ENCODE measurements at regions of chr1 and their contacts with region 1.

Region 1: GRCh38 chr1:150629115-150629928 is at the start of gene ENSA:
- DNase-seq: peak; percentile 89 to 99 (median 92)
- ATAC-seq: peak; percentile 85
- H3K4me3 ChIP-seq: peak within 1 kb of the TSS; percentile 77
- H3K4me3 Mint-ChIP-seq: no peak within 1 kb of the TSS
- H3K27ac ChIP-seq: peak within 1 kb of the TSS; percentile 96 to 97
- H3K27ac Mint-ChIP-seq: no peak within 1 kb of the TSS
- H3K4me1 ChIP-seq: peaks cover 24% of the 10 kb centered on the region
- H3K4me1 Mint-ChIP-seq: peaks cover 21% of the 10 kb centered on the region
- H3K27me3 ChIP-seq: no peaks in the 10 kb centered on the region
- H3K27me3 Mint-ChIP-seq: no peaks in the 10 kb centered on the region
- CTCF ChIP-seq: no peak
- total RNA-seq, gene ENSA: 132 to 137 TPM

Region 2: DNA sequence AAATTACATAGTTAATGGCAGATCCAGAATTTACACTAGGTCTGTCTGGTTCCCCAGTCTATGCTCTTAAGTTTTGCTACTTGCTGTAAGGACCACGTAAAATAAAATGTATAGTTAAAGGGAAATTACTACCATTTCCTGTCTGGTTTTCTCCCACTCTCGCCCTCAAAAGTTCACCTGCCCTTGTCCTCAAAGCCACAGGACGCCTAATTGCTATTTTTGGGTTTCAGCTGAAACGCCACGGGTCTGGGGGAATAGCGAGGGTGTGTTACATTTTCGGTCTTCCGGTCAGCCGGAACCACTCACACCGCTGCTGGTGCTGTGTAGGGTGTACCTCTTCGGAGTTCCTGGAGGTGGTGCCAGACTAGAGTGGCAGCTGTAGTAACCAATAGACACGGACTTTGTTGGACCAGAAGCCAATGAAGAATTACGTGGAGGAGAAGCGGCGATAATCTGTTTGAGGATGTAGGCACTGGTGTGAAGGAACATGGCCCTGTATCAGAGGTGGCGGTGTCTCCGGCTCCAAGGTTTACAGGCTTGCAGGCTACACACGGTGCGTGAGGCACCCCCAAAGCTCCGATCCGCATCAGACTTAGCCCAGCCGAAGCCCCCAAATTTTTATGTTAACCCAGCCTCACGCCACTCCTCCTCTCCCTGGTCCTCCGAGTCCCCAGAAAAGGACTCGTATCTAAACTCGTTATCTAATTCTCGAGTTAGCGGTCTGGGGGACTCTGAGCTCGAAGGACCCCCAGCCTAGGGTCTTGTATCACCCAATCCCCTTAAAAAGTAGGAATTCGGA is 142.2 kb before region 1 on chr1 and contains the start of gene TARS2:
- CTCF ChIA-PET with region 1: no interaction called
- POLR2A ChIA-PET with region 1: interaction called, 10 read pairs
- intact Hi-C with region 1: no loop called
- DNase-seq: peak; percentile 85 to 99 (median 93)
- ATAC-seq: peak; percentile 100
- H3K4me3 ChIP-seq: peak within 1 kb of the TSS; percentile 67
- H3K4me3 Mint-ChIP-seq: peak within 1 kb of the TSS; percentile 98
- H3K27ac ChIP-seq: peak within 1 kb of the TSS; percentile 53 to 59
- H3K27ac Mint-ChIP-seq: peak within 1 kb of the TSS; percentile 84
- H3K4me1 ChIP-seq: peaks cover 16% of the 10 kb centered on the region
- H3K4me1 Mint-ChIP-seq: peaks cover 20% of the 10 kb centered on the region
- H3K27me3 ChIP-seq: no peaks in the 10 kb centered on the region
- H3K27me3 Mint-ChIP-seq: no peaks in the 10 kb centered on the region
- CTCF ChIP-seq: no peak
- total RNA-seq, gene TARS2: 22.8 to 25.3 TPM

Region 3: DNA sequence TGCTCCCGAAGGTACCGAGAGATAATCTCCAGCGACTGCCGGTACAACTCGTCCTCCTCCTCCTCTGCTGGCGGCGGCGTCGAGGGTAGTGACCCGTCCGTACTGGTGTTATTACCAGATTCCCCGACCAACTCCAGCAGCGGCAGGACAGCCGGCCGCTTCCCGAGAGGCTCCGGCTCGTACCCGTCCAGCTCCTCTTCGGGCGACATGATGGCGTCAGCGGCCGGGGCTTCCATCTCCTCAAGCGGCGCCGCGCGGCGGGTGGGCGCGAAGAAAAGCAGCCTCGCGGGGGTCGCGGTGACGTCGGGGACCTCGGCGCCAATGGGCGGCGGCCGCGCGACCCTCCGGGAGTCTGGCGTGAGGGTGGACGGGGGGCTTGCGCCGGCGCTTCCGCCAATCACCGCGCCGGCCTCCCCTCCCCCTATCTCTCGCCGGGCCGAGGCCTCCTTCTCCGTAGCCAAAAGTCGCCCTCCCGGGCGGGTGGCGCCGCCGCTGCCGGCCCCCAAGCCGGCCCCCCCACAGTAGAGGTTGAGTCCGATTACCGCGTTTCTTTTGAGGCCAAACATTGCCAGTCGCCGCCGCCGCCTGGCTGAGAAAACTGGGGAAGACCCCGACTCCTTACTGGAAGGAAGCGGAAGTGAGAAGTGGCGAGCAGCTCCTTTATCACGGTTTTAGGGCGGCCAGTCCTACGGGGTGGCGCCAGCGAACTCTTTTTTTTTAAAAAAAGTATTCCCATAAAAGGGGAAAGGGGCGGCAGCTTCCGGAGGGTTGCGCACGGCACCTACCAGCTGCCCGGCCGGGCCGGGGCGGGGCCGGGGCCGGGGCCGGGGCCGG is 50.1 kb before region 1 on chr1 and contains the start of gene MCL1:
- CTCF ChIA-PET with region 1: no interaction called
- POLR2A ChIA-PET with region 1: interaction called, 94 read pairs
- intact Hi-C with region 1: loop called (anchors 2 kb)
- DNase-seq: peak; percentile 70 to 95 (median 82)
- ATAC-seq: peak; percentile 63
- H3K4me3 ChIP-seq: peak within 1 kb of the TSS; percentile 84
- H3K4me3 Mint-ChIP-seq: peak within 1 kb of the TSS; percentile 99
- H3K27ac ChIP-seq: peak within 1 kb of the TSS; percentile 93 to 97
- H3K27ac Mint-ChIP-seq: peak within 1 kb of the TSS; percentile 98
- H3K4me1 ChIP-seq: peaks cover 22% of the 10 kb centered on the region
- H3K4me1 Mint-ChIP-seq: peaks cover 41% of the 10 kb centered on the region
- H3K27me3 ChIP-seq: no peaks in the 10 kb centered on the region
- H3K27me3 Mint-ChIP-seq: no peaks in the 10 kb centered on the region
- CTCF ChIP-seq: no peak
- total RNA-seq, gene MCL1: 737 to 747 TPM

Region 4: GRCh38 chr1:150650199-150650598 is 20.9 kb after region 1 on chr1:
- CTCF ChIA-PET with region 1: no interaction called
- POLR2A ChIA-PET with region 1: interaction called, 12 read pairs
- intact Hi-C with region 1: no loop called
- DNase-seq: no peak
- ATAC-seq: no peak
- H3K4me3 ChIP-seq: no peak overlapping the region
- H3K4me3 Mint-ChIP-seq: no peak overlapping the region
- H3K27ac ChIP-seq: no peak overlapping the region
- H3K27ac Mint-ChIP-seq: no peak overlapping the region
- H3K4me1 ChIP-seq: no peaks in the 10 kb centered on the region
- H3K4me1 Mint-ChIP-seq: no peaks in the 10 kb centered on the region
- H3K27me3 ChIP-seq: no peaks in the 10 kb centered on the region
- H3K27me3 Mint-ChIP-seq: no peaks in the 10 kb centered on the region
- CTCF ChIP-seq: no peak

Region 5: DNA sequence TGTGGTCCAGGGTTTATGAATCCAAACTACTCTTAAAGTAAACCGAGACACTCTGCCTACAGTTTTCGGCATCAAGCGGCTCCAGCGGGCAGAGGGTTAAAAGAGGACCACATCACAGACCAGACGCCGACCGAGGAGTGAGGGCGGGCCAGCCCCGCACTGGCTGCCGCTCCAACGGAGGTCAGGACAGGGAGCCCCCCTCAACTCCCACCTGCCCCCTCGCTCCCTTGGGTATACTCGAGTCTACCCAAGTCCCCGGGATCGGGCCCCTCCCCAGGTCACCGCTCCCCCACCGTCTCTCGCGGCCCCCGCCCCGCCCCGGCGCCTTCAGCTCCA is 246.8 kb after region 1 on chr1:
- CTCF ChIA-PET with region 1: no interaction called
- POLR2A ChIA-PET with region 1: no interaction called
- intact Hi-C with region 1: loop called in 1 of 2 experiments (anchors 1 kb)
- DNase-seq: no peak
- ATAC-seq: no peak
- H3K4me3 ChIP-seq: peak overlapping the region; percentile 79
- H3K4me3 Mint-ChIP-seq: peak overlapping the region; percentile 98
- H3K27ac ChIP-seq: peak overlapping the region; percentile 68 to 86
- H3K27ac Mint-ChIP-seq: peak overlapping the region; percentile 92
- H3K4me1 ChIP-seq: peaks cover 15% of the 10 kb centered on the region
- H3K4me1 Mint-ChIP-seq: peaks cover 43% of the 10 kb centered on the region
- H3K27me3 ChIP-seq: no peaks in the 10 kb centered on the region
- H3K27me3 Mint-ChIP-seq: no peaks in the 10 kb centered on the region
- CTCF ChIP-seq: no peak

Region 6: DNA sequence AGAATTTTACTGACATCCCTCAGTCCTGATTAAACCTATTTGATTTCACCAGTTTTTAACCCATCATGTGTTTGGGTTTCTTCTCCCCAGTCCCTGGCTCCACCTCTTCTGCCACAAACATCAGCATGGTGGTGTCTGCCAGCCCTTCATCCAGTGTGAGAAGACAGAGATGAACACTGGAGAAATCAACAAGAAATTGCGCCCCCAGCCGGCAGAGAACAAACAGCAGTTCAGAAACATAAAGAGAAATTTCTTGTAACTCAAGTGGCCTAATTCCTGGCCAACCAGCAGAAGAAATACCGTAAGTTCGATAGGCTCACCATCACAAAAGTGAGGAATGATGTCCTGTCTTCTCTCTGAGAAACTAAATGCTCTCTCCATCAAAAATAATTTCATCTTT is 1389.2 kb after region 1 on chr1:
- CTCF ChIA-PET with region 1: no interaction called
- POLR2A ChIA-PET with region 1: no interaction called
- intact Hi-C with region 1: no loop called
- DNase-seq: peak in 2 of 14 experiments; percentile 25 to 33
- ATAC-seq: no peak
- H3K4me3 ChIP-seq: no peak overlapping the region
- H3K4me3 Mint-ChIP-seq: no peak overlapping the region
- H3K27ac ChIP-seq: no peak overlapping the region
- H3K27ac Mint-ChIP-seq: no peak overlapping the region
- H3K4me1 ChIP-seq: peaks cover 5% of the 10 kb centered on the region
- H3K4me1 Mint-ChIP-seq: no peaks in the 10 kb centered on the region
- H3K27me3 ChIP-seq: peaks cover 0 to 3% of the 10 kb centered on the region in 2 experiments
- H3K27me3 Mint-ChIP-seq: peaks cover 12% of the 10 kb centered on the region
- CTCF ChIP-seq: no peak

Measured in CD4-positive, alpha-beta T cell (primary cell).